ENCODE measurements at regions of chr6 and their contacts with region 1.

Region 1: DNA sequence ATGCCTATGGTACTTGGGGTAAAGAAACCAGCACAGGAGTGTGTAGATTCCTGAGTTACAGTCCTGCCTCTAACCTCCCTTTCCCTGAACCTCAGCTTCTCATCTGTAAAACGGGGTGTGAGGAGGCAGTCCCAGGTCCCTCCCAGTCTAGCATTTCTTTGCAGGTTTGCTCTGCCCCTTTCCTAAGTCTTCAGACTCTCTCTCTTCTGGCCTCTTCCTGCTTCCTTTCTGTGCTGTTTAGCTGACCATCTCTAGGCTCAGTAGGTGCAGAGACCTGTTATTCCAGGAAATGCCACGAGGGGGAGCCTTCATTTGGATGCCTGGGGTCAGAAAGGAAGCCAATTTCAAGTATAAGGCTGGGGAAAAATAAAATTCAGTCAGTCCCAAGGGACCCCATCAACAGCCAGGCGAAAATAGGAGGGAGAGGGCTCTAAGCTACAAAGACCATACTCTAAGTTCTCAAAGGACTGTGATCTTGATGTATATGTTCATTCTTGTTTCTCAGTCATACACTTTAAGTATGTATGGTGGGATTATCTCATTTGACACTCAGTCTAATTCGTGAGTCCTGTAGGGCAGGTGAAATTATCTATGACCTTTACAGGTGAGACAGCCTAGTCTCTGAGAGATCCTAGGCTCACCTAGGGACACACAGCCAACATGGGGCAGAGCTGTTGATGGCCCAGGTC is 89.1 kb downstream of the NCR2 start:
- DNase-seq: peak in 4 of 5 donors; percentile 73 to 82 (median 78)
- ATAC-seq: peak; percentile 40 to 62 (median 41)
- H3K4me3 ChIP-seq: no peak overlapping the region
- H3K27ac ChIP-seq: no peak overlapping the region
- H3K4me1 ChIP-seq: peaks cover 2 to 34% (median 24%) of the 10 kb centered on the region in 12 donors
- H3K27me3 ChIP-seq: peaks cover 0 to 42% (median 0%) of the 10 kb centered on the region in 9 donors
- CTCF ChIP-seq: peak; percentile 75 to 87 (median 82)
- POLR2A ChIP-seq: no peak

Region 2: GRCh38 chr6:41443616-41444525 is 19.4 kb after region 1 on chr6:
- intact Hi-C with region 1: loop called in 1 of 10 experiments (anchors 2 kb)
- DNase-seq: peak in 4 of 5 donors; percentile 50 to 78 (median 67)
- ATAC-seq: peak; percentile 26 to 69 (median 48)
- H3K4me3 ChIP-seq: peak overlapping the region in 7 of 12 donors; percentile 5 to 39 (median 34)
- H3K27ac ChIP-seq: peak overlapping the region in 10 of 12 donors; percentile 32 to 83 (median 67)
- H3K4me1 ChIP-seq: peaks cover 0 to 24% (median 11%) of the 10 kb centered on the region in 12 donors
- H3K27me3 ChIP-seq: peaks cover 0 to 14% (median 8%) of the 10 kb centered on the region in 9 donors
- CTCF ChIP-seq: no peak
- POLR2A ChIP-seq: no peak

Region 3: DNA sequence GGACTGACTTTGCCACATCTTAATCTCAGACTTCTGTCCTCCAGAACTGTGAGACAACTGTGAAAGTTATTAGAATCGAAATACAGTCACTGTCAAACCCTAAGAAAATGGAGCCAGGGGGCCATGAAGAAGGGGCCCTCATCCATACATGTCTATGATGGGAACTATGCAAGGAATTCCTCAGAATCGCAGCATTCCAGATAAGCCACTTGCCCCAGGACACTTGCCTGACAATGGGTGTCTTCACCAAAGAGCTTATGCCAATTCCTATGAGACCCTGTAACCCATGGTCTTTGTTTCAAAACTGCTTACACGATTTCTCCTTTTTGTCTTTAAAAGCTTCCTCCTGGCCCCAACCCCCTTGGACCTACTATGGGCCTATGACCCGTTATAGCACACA is 31.3 kb after region 1 on chr6:
- intact Hi-C with region 1: loop called in 4 of 10 experiments (anchors 2 to 5 kb)
- DNase-seq: no peak
- ATAC-seq: no peak
- H3K4me3 ChIP-seq: no peak overlapping the region
- H3K27ac ChIP-seq: no peak overlapping the region
- H3K4me1 ChIP-seq: peaks cover 0 to 20% (median 14%) of the 10 kb centered on the region in 12 donors
- H3K27me3 ChIP-seq: peaks cover 0 to 9% (median 0%) of the 10 kb centered on the region in 9 donors
- CTCF ChIP-seq: no peak
- POLR2A ChIP-seq: no peak

Region 4: DNA sequence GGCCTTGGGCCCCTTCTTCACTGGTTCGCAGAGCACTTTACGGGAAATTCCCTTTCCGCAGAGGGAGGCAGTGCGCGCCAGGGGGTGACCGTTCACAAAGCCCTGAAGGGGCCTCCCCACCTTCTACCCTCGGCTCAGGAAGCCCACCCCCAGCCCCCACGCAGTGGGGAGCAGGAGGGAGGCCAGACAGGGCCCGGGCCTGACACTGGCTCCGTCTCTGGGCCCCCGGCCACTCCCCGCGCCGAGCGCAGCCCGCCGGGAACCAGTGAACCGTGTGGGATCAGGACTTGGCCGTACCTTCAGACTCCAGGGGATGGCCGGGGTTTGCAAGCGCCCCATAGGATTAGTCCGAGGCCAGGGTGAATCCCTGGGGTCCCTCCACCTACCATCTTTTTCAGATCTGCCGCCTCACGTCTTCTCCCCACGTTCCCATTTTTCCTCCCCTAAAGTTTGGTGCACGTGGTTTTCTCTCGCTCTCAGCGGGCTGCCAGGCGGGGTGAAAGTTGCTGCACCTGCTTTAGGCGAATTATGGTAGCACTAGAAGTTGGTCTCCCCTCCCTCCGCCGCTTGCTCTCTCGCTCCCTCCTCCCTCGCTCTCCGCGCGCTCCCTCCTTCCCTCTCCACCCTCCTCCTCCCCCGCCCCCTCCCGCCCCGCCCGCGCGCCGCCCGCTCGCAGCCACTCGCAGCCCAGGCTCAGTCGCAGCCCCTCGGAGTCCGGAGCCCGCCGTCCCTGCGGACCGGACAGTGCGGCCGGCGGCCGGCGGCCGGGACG is 121.4 kb after region 1 on chr6 and contains the start of gene FOXP4:
- intact Hi-C with region 1: loop called in 2 of 10 experiments (anchors 5 kb)
- DNase-seq: peak; percentile 90 to 93 (median 93)
- ATAC-seq: peak; percentile 88 to 94 (median 93)
- H3K4me3 ChIP-seq: peak within 1 kb of the TSS; percentile 51 to 97 (median 80)
- H3K27ac ChIP-seq: peak within 1 kb of the TSS; percentile 25 to 89 (median 79)
- H3K4me1 ChIP-seq: peaks cover 4 to 48% (median 20%) of the 10 kb centered on the region in 12 donors
- H3K27me3 ChIP-seq: peaks cover 0 to 20% (median 0%) of the 10 kb centered on the region in 9 donors
- CTCF ChIP-seq: no peak
- POLR2A ChIP-seq: no peak
- total RNA-seq, gene FOXP4: 11.3 to 22.5 (median 16.0) TPM

Region 5: DNA sequence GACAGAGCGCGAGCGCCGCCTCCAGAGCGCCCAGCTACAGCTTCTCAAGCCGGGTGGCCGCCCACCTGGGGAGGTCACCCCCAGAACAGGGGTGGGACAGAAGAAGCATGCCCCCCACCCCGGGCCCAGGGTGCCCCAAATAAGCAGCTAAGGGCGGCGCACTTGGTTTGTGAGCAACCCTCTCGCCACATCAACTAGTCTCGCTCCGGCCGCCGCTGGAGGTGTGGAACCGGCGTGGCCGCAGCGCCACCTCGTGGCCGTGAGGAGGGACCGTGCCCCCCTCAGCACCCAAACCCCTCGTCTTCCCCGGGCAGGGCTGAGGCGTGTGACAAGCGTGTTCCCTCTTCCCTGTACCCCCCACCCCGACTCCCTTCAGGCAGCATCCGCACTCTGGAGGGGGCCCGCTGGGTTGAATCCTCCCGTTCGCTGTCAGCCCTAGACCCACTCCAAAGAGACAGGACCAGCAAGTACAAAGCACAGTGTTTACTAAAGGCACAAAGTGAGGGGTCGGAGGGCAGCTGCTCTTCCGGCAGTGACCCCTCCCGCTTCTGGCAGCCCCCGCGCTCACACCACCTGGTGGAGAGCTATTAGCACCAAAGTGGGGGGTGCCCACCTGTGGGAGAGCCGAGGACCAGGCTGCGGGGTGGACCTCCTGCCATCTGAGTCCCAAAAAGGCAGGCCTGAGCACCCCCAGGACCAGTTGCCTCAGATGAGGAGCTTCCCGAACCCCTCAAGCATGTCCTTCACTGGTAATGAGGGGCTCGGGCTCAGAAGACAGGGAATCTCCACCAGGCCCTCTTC is 259.2 kb after region 1 on chr6:
- intact Hi-C with region 1: loop called in 3 of 10 experiments (anchors 2 to 10 kb)
- DNase-seq: peak; percentile 80 to 91 (median 84)
- ATAC-seq: peak; percentile 59 to 82 (median 78)
- H3K4me3 ChIP-seq: peak overlapping the region; percentile 5 to 66 (median 55)
- H3K27ac ChIP-seq: peak overlapping the region; percentile 66 to 91 (median 82)
- H3K4me1 ChIP-seq: peaks cover 0 to 35% (median 20%) of the 10 kb centered on the region in 12 donors
- H3K27me3 ChIP-seq: no peaks in the 10 kb centered on the region
- CTCF ChIP-seq: peak; percentile 86 to 97 (median 93)
- POLR2A ChIP-seq: no peak

Measured in heart left ventricle (tissue), 16 donors.